ENCODE measurements at regions of chr5 and their contacts with region 1.

Region 1: GRCh38 chr5:148374692-148375360 is 8.9 kb upstream of the FBXO38 start:
- DNase-seq: peak; percentile 36 to 48
- H3K4me3 ChIP-seq: no peak overlapping the region
- H3K27ac ChIP-seq: no peak overlapping the region
- H3K4me1 ChIP-seq: no peaks in the 10 kb centered on the region
- H3K27me3 ChIP-seq: no peaks in the 10 kb centered on the region
- CTCF ChIP-seq: peak; percentile 84

Region 2: GRCh38 chr5:148179234-148179824 is 195.5 kb before region 1 on chr5:
- CTCF ChIA-PET with region 1: no interaction called
- POLR2A ChIA-PET with region 1: no interaction called
- intact Hi-C with region 1: loop called (anchors 1 kb)
- DNase-seq: peak; percentile 6 to 63
- H3K4me3 ChIP-seq: no peak overlapping the region
- H3K27ac ChIP-seq: no peak overlapping the region
- H3K4me1 ChIP-seq: no peaks in the 10 kb centered on the region
- H3K27me3 ChIP-seq: no peaks in the 10 kb centered on the region
- CTCF ChIP-seq: peak; percentile 84

Measured in PC-9 (cell line).